Calu3 (cell line): ENCODE measurements at regions of chr6 and their contacts with region 1.

Region 1: GRCh38 chr6:79608334-79609224 is 22.6 kb upstream of the SH3BGRL2 start:
- DNase-seq: peak; percentile 75
- H3K4me3 Mint-ChIP-seq: no peak overlapping the region
- H3K27ac Mint-ChIP-seq: peak overlapping the region; percentile 56
- H3K4me1 Mint-ChIP-seq: peaks cover 76% of the 10 kb centered on the region
- H3K27me3 Mint-ChIP-seq: no peaks in the 10 kb centered on the region
- CTCF ChIP-seq: no peak

Region 2: GRCh38 chr6:79630883-79631692 is 22.5 kb after region 1 on chr6 and contains the start of gene SH3BGRL2:
- CTCF ChIA-PET with region 1: interaction called, 13 read pairs
- intact Hi-C with region 1: no loop called
- DNase-seq: peak; percentile 84
- H3K4me3 Mint-ChIP-seq: peak within 1 kb of the TSS; percentile 95
- H3K27ac Mint-ChIP-seq: peak within 1 kb of the TSS; percentile 89
- H3K4me1 Mint-ChIP-seq: peaks cover 49% of the 10 kb centered on the region
- H3K27me3 Mint-ChIP-seq: no peaks in the 10 kb centered on the region
- CTCF ChIP-seq: no peak
- total RNA-seq, gene SH3BGRL2: 44.3 and 46.1 TPM in 2 replicates

Region 3: GRCh38 chr6:79737172-79737571 is 128.6 kb after region 1 on chr6:
- CTCF ChIA-PET with region 1: no interaction called
- intact Hi-C with region 1: no loop called
- DNase-seq: no peak
- H3K4me3 Mint-ChIP-seq: peak overlapping the region; percentile 73
- H3K27ac Mint-ChIP-seq: peak overlapping the region; percentile 66
- H3K4me1 Mint-ChIP-seq: peaks cover 14% of the 10 kb centered on the region
- H3K27me3 Mint-ChIP-seq: no peaks in the 10 kb centered on the region
- CTCF ChIP-seq: no peak